ENCODE measurements at regions of chr1 and their contacts with region 1.

Region 1: GRCh38 chr1:65254319-65255034 is 54.9 kb upstream of the DNAJC6 start:
- DNase-seq: peak; percentile 89
- ATAC-seq: peak; percentile 99
- H3K4me3 Mint-ChIP-seq: peak overlapping the region; percentile 78
- H3K27ac Mint-ChIP-seq: no peak overlapping the region
- H3K4me1 Mint-ChIP-seq: peaks cover 23% of the 10 kb centered on the region
- H3K27me3 Mint-ChIP-seq: peaks cover 26% of the 10 kb centered on the region

Region 2: DNA sequence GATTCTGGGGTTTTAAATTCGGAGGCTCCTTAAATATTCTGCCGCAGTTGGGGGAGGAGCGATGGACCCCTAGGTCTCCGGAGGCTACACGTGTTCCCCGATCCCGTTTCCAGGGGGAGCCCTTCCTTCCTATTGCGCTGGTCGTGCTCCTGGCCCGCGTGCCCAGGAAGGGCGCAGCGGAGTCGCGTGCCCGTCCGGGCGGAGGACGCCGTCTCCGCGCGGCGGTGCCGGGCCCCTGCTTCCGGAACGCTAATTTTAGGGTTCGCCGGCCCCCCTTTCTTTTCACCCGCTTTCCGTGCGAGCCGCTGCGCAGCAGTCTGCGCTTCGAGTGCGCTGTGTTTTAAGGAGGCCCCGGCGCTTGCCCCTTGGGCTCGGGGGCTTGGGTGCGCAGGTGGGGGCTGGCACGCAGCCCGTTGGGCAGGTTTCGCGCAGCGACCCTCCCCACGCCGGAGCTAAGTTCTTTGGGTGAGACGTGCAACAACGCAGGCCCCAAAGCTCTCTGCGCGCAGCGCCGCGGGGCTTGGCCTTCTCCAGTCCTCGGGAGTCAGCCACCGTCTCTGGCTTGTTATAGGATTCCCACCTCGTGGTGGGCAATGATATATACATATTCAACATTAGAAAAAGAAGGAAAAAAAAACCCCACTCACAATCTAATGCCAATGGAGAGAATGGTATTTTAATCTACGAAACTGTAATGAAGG is 11.3 kb after region 1 on chr1:
- CTCF ChIA-PET with region 1: interaction called, 14 read pairs
- POLR2A ChIA-PET with region 1: interaction called, 3 read pairs
- DNase-seq: peak; percentile 55
- ATAC-seq: peak; percentile 72
- H3K4me3 Mint-ChIP-seq: peak overlapping the region; percentile 69
- H3K27ac Mint-ChIP-seq: peak overlapping the region; percentile 30
- H3K4me1 Mint-ChIP-seq: peaks cover 22% of the 10 kb centered on the region
- H3K27me3 Mint-ChIP-seq: peaks cover 40% of the 10 kb centered on the region

Region 3: GRCh38 chr1:65276197-65276939 is 21.9 kb after region 1 on chr1:
- CTCF ChIA-PET with region 1: no interaction called
- POLR2A ChIA-PET with region 1: no interaction called
- DNase-seq: no peak
- ATAC-seq: no peak
- H3K4me3 Mint-ChIP-seq: no peak overlapping the region
- H3K27ac Mint-ChIP-seq: no peak overlapping the region
- H3K4me1 Mint-ChIP-seq: no peaks in the 10 kb centered on the region
- H3K27me3 Mint-ChIP-seq: peaks cover 16% of the 10 kb centered on the region

Measured in activated CD8-positive, alpha-beta T cell treated with anti-CD3 and anti-CD28 coated beads, Interleukin-2, amount 10 ng/mL, durations not matched to agents 7 days and 5 days (primary cell).